ENCODE measurements at regions of chr18 and their contacts with region 1.

Region 1: DNA sequence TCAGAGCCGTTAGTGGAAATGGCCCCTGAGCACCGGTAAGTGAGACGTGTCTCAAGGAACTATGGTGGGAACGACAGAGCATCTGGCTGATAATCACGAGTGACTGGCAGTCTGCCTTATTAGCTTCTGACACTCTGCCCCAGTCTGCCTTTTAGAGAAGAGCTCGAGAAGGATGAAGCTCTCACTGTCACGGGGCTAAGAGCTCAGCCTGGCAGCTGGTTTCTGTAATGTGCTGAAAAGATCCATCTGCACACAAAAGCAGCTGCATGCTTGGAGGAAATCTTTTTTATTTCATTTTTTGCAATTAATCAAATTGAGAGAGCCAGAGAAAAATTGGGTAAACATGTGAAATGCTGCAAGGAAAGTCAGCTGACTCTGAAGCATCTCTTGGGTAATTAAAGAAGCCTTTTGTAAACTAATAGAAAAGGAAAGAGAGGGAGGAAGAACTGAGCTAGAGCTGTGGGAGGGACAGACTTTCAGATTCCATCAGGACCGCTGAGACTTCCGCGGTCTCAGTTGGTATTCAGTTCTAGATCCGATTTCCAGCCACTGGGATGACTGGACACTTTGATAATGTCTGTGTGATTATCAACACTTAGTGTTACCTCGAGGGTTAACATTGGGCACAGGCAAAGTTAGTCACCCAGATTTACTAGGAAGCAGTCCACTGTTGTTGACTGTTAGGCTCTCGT is 24.4 kb downstream of the MBP start:
- DNase-seq: peak in 1 of 2 donors; percentile 75
- ATAC-seq: peak; percentile 69
- H3K4me3 ChIP-seq: no peak overlapping the region
- H3K27ac ChIP-seq: peak overlapping the region in 1 of 2 donors; percentile 62
- H3K4me1 ChIP-seq: no peaks in the 10 kb centered on the region
- H3K27me3 ChIP-seq: no peaks in the 10 kb centered on the region

Region 2: DNA sequence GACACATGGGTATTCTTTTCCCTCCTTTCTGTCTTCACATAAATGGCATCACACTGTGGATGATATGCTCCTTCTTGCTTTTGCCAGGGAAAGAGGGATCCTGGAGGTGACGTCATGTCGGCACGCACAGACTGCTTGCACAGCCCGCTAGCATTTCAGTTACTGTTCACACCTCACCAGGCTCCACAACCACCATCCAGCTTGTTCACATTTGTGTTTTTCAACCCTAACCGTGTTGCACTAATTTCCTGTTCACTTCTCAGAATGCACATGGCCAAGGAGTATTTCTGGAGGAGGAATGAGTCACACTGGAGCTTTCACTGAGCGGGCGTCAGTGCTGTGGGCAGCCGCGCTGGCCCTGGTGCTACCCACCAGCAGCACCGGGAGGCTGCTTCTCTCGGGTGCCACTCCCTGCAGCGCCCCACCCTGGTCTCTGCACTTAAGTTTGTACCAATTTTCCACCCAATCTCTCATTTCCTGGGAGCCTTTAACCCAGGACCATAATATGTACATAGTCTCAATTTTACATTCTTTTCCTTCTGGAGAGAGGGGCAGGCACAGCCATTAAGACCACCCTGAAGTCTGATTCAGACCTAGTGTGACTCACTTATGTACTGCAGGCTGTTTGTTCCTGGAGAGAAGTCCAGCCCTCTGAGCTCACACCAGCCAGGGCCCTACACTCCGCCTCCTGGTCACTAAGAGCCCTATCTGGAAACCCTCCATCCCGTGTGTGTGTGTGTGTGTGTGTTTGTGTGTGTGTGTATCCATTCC is 40.7 kb before region 1 on chr18:
- intact Hi-C with region 1: loop called in 1 of 2 experiments (anchors 5 kb)
- DNase-seq: peak; percentile 91
- ATAC-seq: peak; percentile 82
- H3K4me3 ChIP-seq: no peak overlapping the region
- H3K27ac ChIP-seq: peak overlapping the region in 1 of 2 donors; percentile 19
- H3K4me1 ChIP-seq: peaks cover 0 to 3% of the 10 kb centered on the region in 2 donors
- H3K27me3 ChIP-seq: no peaks in the 10 kb centered on the region

Measured in aorta (tissue), 5 donors.